Activated naive CD8-positive, alpha-beta T cell treated with anti-CD3 and anti-CD28 coated beads, Interleukin-2, amount 10 ng/mL, durations not matched to agents 7 days and 5 days (primary cell): ENCODE measurements at regions of chr17 and their contacts with region 1.

Region 1: DNA sequence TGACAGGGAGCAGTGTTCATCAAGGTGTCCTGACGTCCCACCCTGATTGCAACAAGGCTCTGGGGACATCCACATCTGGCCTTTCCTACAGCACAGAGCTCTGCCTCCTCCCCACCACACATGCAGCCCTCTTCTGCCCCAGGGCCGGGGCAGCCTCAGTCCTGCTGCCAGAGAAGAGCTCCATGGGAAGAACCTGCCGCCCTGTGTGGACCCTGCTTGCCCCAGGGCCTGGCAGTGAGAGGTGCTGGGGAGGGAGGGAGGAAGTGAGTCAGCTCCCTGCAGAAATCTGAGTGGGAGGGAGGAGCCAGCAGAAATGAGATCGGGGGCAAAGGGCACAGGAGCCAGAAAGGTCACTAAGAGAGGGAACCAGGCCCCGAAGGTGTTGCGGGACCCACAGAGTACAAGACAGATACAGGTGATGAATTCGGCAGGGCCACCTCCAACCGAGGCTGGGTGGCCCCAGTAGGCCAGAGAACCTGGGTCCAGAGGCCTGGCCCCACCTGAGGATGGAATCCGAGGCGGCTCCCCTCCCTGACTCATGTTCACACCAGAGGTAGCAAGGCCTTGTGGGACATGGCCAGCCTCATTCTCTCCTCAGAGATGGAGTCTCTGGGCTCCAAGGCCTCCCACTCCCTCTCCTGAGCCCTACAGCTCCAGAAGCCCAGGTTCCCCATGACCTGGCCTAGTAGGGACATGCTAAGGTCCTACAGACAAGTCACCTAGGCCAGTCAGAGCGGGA is 24.8 kb downstream of the MYO18A start:
- DNase-seq: peak; percentile 61
- ATAC-seq: peak; percentile 95
- H3K4me3 Mint-ChIP-seq: peak overlapping the region; percentile 57
- H3K27ac Mint-ChIP-seq: peak overlapping the region; percentile 85
- H3K4me1 Mint-ChIP-seq: peaks cover 34% of the 10 kb centered on the region
- H3K27me3 Mint-ChIP-seq: no peaks in the 10 kb centered on the region

Region 2: GRCh38 chr17:29168079-29168758 is 12.8 kb after region 1 on chr17:
- POLR2A ChIA-PET with region 1: no interaction called
- DNase-seq: no peak
- ATAC-seq: no peak
- H3K4me3 Mint-ChIP-seq: no peak overlapping the region
- H3K27ac Mint-ChIP-seq: no peak overlapping the region
- H3K4me1 Mint-ChIP-seq: peaks cover 2% of the 10 kb centered on the region
- H3K27me3 Mint-ChIP-seq: no peaks in the 10 kb centered on the region

Region 3: DNA sequence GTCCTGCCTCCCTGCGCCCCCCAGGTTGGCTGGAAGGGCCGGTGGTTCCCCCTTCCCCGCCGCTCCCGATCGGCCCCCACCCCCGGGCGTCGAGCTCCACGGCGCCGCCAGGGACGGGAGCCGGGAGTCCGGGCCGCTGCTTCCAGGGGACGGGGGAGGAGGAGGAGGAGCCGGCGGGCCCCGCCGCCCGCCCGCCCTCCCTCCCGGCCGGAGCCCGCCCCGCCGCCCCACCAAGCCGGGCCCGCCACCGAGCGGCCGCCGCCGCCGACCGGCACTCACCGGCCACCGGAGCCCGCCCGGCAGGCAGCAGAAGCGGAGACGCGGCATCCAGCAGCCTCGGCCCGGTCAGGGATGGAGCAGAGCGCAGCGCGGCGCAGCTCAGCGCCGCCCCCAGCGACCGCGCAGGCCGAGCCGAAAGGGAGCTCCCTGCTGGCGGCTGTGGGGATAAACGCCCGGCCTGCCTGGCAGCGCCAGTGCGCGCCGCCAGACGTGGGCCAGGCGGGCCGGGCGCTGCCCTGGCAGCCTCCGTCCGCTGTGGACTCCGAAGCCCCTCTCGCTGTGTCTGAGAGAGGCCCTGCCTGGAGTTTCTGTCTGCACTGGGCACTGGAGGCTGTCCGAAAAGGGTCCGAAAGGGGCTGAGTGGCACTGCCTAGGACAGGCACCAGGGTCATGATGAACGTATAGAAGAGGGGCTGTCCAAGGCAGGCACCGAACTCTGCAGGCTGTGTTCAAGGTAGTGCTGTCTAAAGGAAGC is 24.8 kb after region 1 on chr17 and contains the start of gene MYO18A:
- POLR2A ChIA-PET with region 1: interaction called, 23 read pairs
- DNase-seq: peak; percentile 90
- ATAC-seq: peak; percentile 93
- H3K4me3 Mint-ChIP-seq: peak within 1 kb of the TSS; percentile 49
- H3K27ac Mint-ChIP-seq: peak within 1 kb of the TSS; percentile 12
- H3K4me1 Mint-ChIP-seq: peaks cover 29% of the 10 kb centered on the region
- H3K27me3 Mint-ChIP-seq: peaks cover 12% of the 10 kb centered on the region
- total RNA-seq, gene MYO18A: 79.7 to 80.6 TPM